ENCODE measurements at regions of chr2 and their contacts with region 1.

Region 1: GRCh38 chr2:219642465-219643080 is 15.1 kb downstream of the SLC4A3 start:
- DNase-seq: peak; percentile 92
- H3K4me3 ChIP-seq: no peak overlapping the region
- H3K27ac ChIP-seq: no peak overlapping the region
- H3K4me1 ChIP-seq: no peaks in the 10 kb centered on the region
- H3K27me3 ChIP-seq: peaks cover 0 to 3% of the 10 kb centered on the region in 2 experiments
- CTCF ChIP-seq: peak; percentile 99 to 100
- POLR2A ChIP-seq: no peak

Region 2: DNA sequence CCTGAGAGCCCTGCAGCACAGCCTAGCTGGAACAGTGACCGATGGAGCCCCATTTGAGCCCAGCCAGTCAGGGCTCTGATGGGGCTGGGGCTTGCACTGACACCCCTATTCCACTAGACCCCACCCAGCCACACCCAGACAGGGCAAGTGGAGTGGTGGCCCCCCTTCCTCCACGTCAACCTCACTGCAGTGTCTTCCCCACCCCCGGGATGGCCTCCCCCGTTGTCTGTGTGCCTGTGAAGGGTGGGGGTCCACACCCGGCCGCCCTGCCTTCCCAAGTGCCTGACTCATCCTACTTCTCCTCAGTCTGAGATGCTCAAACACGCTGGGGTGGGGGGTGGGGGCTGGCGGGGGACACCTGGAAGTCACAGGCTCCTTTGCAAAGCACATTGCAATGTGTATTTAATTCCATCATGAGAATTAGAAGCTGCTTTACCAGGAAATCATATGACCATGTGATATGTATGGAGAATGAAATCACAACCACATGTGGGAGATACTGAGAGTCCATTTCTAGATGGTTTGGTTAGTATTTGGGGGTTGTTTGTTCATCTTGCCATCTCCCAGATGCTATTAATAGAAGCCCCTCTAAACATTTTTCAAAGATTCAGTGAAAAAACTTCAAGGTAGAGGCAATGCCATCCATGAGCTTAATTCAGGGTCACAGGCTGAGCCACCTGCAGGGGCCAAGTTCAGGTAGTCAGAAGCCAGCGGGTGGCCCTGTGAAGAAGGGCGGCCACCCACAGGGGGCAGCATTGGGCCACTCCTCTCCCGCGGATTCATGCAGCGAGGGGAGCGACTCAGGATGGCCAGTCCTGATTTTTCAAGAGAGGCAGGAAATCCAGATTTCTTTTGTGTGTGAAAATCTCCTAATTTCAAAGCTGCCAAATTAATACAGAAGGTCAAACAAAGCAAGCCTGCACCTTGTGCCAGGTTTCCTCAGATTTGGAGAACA is 166.6 kb before region 1 on chr2:
- CTCF ChIA-PET with region 1: no interaction called
- POLR2A ChIA-PET with region 1: no interaction called
- dilution Hi-C with region 1: no loop called
- intact Hi-C with region 1: loop called (anchors 1 kb)
- DNase-seq: peak; percentile 45
- H3K4me3 ChIP-seq: no peak overlapping the region
- H3K27ac ChIP-seq: no peak overlapping the region
- H3K4me1 ChIP-seq: no peaks in the 10 kb centered on the region
- H3K27me3 ChIP-seq: peaks cover 0 to 2% of the 10 kb centered on the region in 2 experiments
- CTCF ChIP-seq: peak; percentile 80 to 91
- POLR2A ChIP-seq: no peak

Region 3: DNA sequence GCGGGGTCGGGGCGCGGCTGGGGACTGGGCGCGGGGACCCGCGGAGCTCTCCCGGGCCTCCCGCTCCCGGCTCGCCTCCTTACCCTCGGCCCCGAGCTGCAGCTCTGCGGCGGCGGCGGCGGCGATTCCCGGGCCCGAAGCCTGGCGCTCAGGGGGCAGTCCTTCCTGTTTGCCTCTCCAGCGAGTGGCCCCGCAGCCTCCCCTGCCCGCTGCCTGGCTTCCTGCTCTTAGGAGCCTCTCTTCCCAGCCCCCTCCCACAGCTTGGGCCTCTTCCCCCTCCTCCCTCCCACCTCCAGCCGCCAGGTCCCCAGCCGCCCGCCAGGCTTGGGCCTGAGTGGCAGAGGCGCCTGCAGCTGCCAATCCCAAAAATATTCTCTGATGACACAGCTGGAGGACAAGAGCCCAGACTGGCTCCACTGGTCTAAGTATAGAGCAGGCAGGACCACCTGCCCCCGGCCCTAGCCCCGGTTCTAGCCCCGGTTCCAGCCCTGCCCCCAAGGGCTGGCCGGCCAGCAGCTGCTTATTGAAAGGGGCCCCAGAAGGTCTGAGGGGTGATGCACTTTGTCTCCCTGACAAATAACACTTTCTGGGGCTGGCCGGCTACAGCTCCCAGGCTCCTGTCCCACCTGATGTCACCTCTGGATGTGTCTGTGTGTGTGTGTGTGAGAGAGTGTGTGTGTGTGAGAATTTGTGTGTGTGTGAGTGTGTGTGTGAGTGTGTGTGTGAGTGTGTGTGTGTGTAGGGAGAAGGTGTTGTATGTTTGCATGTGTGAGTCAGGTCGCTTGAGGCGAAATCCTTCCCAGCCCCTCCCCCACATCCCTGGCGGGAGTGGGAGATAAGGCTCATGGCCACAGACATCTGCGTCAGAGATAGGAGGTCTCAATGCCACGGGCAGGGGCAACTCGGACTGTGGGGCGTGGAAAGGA is 71.0 kb before region 1 on chr2 and contains the start of gene OBSL1:
- CTCF ChIA-PET with region 1: interaction called, 8 read pairs
- POLR2A ChIA-PET with region 1: no interaction called
- dilution Hi-C with region 1: no loop called
- intact Hi-C with region 1: loop called (anchors 1 kb)
- DNase-seq: peak; percentile 61
- H3K4me3 ChIP-seq: peak within 1 kb of the TSS in 2 of 3 experiments; percentile 36 to 75
- H3K27ac ChIP-seq: no peak within 1 kb of the TSS
- H3K4me1 ChIP-seq: no peaks in the 10 kb centered on the region
- H3K27me3 ChIP-seq: peaks cover 14 to 25% of the 10 kb centered on the region in 2 experiments
- CTCF ChIP-seq: no peak
- POLR2A ChIP-seq: no peak
- total RNA-seq, gene OBSL1: 8.0 and 16.7 TPM in 2 replicates

Region 4: GRCh38 chr2:219597552-219598307 is 44.8 kb before region 1 on chr2 and contains the start of gene STK11IP:
- CTCF ChIA-PET with region 1: interaction called, 4 read pairs
- POLR2A ChIA-PET with region 1: no interaction called
- dilution Hi-C with region 1: no loop called
- intact Hi-C with region 1: loop called (anchors 1 kb)
- DNase-seq: peak; percentile 95
- H3K4me3 ChIP-seq: peak within 1 kb of the TSS; percentile 47 to 76 (median 67)
- H3K27ac ChIP-seq: peak within 1 kb of the TSS; percentile 86
- H3K4me1 ChIP-seq: peaks cover 12% of the 10 kb centered on the region
- H3K27me3 ChIP-seq: no peaks in the 10 kb centered on the region
- CTCF ChIP-seq: no peak
- POLR2A ChIP-seq: peak; percentile 97
- total RNA-seq, gene STK11IP: 19.2 and 20.2 TPM in 2 replicates

Region 5: GRCh38 chr2:219689676-219690628 is 47.4 kb after region 1 on chr2:
- CTCF ChIA-PET with region 1: interaction called, 5 read pairs
- POLR2A ChIA-PET with region 1: no interaction called
- dilution Hi-C with region 1: no loop called
- intact Hi-C with region 1: loop called (anchors 1 kb)
- DNase-seq: peak; percentile 62
- H3K4me3 ChIP-seq: no peak overlapping the region
- H3K27ac ChIP-seq: no peak overlapping the region
- H3K4me1 ChIP-seq: no peaks in the 10 kb centered on the region
- H3K27me3 ChIP-seq: peaks cover 0 to 2% of the 10 kb centered on the region in 2 experiments
- CTCF ChIP-seq: peak; percentile 43 to 68
- POLR2A ChIP-seq: no peak

Measured in endothelial cell of umbilical vein (primary cell).